Sigmoid colon (tissue), 7 donors: ENCODE measurements at regions of chr2 and their contacts with region 1.

Region 1: GRCh38 chr2:16553226-16553625 is 112.4 kb downstream of the CYRIA start:
- DNase-seq: no peak
- H3K4me3 ChIP-seq: no peak overlapping the region
- H3K27ac ChIP-seq: no peak overlapping the region
- H3K4me1 ChIP-seq: no peaks in the 10 kb centered on the region
- H3K27me3 ChIP-seq: no peaks in the 10 kb centered on the region
- CTCF ChIP-seq: peak in 3 of 4 experiments; percentile 21 to 38 (median 25)
- EP300 ChIP-seq: no peak
- POLR2A ChIP-seq: no peak

Region 2: DNA sequence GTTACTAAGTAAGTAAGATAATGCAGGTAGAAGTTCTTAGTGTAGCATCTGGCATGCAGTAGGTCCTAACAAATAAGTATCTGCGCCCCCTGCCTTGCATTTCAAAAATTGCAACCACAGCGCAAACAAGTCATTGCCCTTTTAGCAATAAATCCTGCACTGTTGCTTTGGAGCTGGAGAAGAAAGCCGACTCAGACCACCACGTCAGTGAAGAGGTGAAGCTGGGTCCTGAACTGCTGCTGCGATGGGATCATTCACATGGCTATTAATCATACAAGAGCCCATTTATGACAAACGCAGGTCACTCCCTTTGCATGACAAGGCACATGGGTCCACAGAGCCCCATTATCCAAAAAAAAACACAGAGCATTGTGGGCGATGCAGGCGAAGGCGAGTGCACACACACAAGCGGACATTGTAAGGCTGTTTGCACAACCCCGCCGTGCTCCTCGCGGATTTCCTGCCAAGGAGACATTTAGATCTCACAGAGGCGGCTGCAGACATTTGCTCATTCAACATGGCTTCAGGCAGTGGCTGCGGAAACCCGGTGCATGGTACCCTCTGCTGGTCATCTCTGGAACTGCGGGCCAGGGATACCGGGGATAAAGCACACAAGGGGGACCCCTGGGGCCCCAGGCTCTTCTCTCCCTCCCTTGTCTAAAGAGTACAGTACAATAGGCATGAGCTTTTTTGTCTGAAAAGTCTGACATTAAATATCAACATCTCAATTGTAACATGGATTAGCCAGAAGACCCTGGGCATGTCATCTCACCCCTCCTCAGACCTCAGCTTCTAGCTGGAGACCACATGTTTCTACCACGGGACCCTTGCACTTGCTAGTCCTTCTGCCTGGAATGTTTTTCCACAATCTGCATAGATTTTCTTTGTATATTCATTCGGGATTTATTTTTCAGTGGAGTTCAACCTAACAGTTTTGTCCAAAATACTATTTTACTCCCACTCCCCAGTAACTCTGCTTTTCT is 55.7 kb after region 1 on chr2:
- intact Hi-C with region 1: loop called (anchors 2 kb)
- DNase-seq: peak; percentile 89
- H3K4me3 ChIP-seq: peak overlapping the region in 3 of 4 donors; percentile 35 to 39 (median 38)
- H3K27ac ChIP-seq: peak overlapping the region in 2 of 4 donors; percentile 20 to 26
- H3K4me1 ChIP-seq: peaks cover 0 to 9% (median 2%) of the 10 kb centered on the region in 4 donors
- H3K27me3 ChIP-seq: no peaks in the 10 kb centered on the region
- CTCF ChIP-seq: peak; percentile 64 to 95 (median 86)
- EP300 ChIP-seq: no peak
- POLR2A ChIP-seq: no peak

Region 3: DNA sequence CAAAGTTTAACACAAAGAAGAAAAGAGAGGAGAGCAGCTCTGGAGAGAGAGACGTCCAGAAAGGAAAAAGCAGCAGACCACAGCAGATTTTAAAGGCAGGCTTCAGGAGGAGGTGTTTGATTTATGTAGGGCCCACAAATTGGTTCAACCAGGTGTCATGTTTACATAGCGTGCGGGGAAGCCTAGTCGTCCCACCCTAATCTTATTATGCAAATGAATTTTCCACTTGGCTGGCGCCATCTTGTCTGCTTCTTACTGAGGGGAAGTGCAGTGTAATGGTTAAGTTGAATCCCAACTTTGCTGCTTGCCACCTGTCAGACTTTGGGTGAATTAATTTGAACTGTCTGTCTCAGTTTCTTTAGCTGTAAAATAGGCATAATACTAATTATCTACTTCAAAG is 394.8 kb after region 1 on chr2:
- intact Hi-C with region 1: no loop called
- DNase-seq: no peak
- H3K4me3 ChIP-seq: no peak overlapping the region
- H3K27ac ChIP-seq: no peak overlapping the region
- H3K4me1 ChIP-seq: no peaks in the 10 kb centered on the region
- H3K27me3 ChIP-seq: no peaks in the 10 kb centered on the region
- CTCF ChIP-seq: no peak
- EP300 ChIP-seq: no peak
- POLR2A ChIP-seq: no peak